ENCODE measurements at regions of chr17 and their contacts with region 1.

Region 1: DNA sequence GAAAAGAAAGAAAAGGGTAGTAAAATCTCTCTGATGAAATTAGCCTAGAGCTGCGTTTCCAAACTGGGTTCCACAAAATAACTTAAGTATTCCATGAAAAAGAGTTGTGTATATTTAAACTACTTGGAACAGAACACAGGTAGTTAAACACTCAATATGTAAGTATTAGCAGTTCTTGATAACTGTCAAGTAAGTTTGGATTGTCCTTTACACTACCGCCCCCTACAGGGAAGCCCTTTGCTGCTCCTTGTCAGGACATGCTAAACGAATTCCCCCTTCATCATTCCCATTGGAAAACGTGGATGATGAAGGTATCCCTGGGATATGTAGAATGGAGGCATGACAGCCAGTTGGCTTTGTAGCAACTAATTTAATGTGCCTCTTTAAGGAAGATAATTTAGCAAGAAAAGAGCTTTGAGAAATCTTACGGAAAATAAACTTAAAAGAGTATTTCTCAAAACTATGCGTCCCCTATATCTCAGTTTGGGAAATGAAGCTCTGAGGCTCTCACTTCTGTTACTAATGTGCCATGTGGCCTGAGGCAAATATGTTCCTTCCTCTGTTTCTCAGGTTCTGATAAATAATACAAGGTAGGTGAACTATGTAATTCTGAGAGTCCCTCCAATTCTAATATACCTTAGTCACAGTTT is 18.8 kb downstream of the NCBP3 start:
- DNase-seq: peak; percentile 44 to 52
- H3K4me3 ChIP-seq: no peak overlapping the region
- H3K27ac ChIP-seq: no peak overlapping the region
- H3K4me1 ChIP-seq: no peaks in the 10 kb centered on the region
- H3K27me3 ChIP-seq: no peaks in the 10 kb centered on the region
- CTCF ChIP-seq: peak; percentile 84

Region 2: DNA sequence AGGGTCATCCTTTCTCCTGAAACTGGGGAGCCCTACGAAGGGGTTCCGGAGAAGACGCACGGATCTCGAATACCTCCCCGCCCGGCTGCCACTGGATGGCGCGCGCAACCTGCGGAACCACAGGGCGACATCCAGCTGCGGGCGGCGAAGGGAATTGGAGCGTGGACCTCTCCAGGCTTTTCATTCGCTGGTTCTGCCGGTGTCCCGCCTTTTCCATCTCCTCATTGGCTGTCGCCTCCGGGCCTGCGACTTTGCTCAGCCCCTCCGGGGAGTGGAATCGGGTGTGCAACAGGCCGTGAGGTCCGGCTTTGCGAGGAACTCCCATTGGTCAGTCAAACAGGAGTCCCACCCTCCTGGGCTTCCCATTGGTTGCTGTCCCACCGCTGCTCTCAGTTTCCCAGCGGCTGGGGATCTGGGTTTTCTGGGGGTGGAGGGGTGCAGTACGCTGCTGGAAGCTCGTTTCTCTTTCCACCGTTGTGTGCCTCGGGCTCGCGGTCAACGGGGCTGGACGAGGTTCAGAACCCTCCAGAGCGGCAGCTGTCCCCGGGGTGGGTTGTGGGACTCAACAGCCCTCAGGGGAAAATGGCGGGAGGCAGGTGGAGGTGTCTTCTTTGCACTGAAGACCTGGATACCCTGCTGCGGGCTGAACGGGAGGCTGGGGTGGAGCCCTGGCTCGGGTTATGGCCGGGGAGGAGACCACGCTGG is 778.3 kb before region 1 on chr17:
- CTCF ChIA-PET with region 1: no interaction called
- POLR2A ChIA-PET with region 1: no interaction called
- intact Hi-C with region 1: loop called (anchors 10 kb)
- DNase-seq: peak; percentile 88 to 94
- H3K4me3 ChIP-seq: peak overlapping the region; percentile 83
- H3K27ac ChIP-seq: no peak overlapping the region
- H3K4me1 ChIP-seq: no peaks in the 10 kb centered on the region; the same call in 1 of the 2 replicates
- H3K27me3 ChIP-seq: no peaks in the 10 kb centered on the region
- CTCF ChIP-seq: peak; percentile 78

Region 3: GRCh38 chr17:3683054-3683511 is 144.2 kb before region 1 on chr17:
- CTCF ChIA-PET with region 1: no interaction called
- POLR2A ChIA-PET with region 1: no interaction called
- intact Hi-C with region 1: loop called (anchors 5 kb)
- DNase-seq: no peak
- H3K4me3 ChIP-seq: no peak overlapping the region
- H3K27ac ChIP-seq: no peak overlapping the region
- H3K4me1 ChIP-seq: no peaks in the 10 kb centered on the region
- H3K27me3 ChIP-seq: no peaks in the 10 kb centered on the region
- CTCF ChIP-seq: peak; percentile 94

Measured in PC-9 (cell line).